ENCODE measurements at regions of chr1 and their contacts with region 1.

Region 1: GRCh38 chr1:234065794-234066447 is 161.4 kb downstream of the SLC35F3 start:
- DNase-seq: peak; percentile 47 to 95 (median 82)

Region 2: DNA sequence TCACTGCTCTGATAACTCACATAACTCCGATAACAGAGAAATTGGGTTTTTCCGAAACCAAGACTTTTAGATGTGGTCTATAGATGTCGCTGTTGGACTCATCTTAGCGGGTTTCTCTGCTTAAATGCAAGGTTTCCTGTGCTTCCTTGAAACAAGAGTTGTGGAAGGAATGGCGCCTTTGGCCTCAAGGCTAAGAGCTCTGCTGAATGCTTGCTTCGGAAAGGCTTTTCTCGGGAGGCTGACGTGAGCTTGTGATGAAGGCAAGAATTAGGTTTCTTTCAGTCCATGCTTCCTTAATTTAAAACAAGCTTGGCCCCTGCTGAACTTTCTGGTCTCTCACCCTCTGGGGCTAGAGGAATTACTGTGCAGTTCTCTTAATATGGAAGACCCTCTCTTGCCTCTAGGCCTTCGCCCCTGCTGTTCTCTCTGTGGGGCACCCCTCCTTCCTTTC is 624.9 kb before region 1 on chr1:
- intact Hi-C with region 1: loop called (anchors 2 kb)
- DNase-seq: peak in 1 of 10 donors; percentile 15

Measured in posterior cingulate gyrus (tissue), 11 donors.